GM10248 (cell line): ENCODE measurements at regions of chr11 and their contacts with region 1.

Region 1: GRCh38 chr11:120929664-120930154 is 94.2 kb upstream of the TBCEL start:
- DNase-seq: peak; percentile 77
- CTCF ChIP-seq: peak; percentile 66

Region 2: DNA sequence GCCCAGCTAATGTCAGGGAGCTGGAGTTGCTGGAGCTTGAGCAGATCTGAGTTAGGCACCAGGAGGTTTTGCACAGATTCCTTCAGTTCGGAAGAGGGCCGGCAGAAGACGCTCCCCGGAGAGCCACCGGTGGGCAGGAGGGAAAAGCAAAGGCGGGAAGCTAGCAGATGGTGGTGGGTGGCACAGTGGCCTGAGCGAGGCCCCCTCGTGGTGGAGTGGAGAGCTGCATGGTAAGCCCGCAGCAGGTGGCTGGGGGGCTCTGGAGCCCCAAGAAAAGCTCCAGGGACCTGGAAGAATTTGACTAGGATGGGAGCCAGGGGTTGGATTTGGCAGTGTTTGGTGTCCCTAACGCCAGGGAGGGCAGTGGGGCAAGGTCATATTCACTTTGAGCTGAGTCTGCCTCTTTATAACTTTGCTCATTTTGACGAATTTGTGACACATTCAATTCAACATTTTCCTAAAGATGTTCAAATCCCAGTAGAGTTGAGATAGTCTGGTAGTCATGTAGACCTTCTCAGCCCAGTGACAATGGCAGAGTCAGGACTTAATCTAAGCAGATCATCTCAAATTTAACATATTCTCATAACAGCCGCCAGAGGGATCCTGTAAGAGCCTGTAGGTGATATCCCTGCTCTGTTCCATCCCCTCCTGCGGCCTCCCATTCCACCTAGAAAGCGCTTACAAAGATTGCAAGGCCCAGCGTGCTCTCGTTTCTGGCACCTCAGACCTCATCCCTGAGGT is 849.8 kb before region 1 on chr11:
- CTCF ChIA-PET with region 1: no interaction called
- POLR2A ChIA-PET with region 1: no interaction called
- DNase-seq: no peak
- CTCF ChIP-seq: peak; percentile 21

Region 3: DNA sequence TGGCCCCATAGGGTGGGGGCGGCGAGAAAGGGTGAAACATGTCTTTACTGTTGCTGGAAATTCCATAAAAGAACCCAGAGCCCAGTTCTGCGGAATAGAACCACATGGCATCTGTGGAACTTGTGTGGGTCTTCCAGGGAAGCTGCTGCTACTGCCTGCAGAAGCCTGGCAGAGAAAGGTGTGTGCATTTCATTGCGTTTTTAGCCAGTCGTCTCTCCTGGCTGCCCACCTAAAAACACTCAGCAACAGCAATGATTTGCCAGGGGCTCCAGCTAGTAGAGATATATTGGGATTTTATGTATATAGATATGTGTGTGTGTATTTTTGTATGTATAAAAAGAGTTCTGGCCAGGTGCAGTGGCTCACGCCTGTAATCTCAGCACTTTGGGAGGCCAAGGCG is 33.0 kb before region 1 on chr11:
- CTCF ChIA-PET with region 1: no interaction called
- POLR2A ChIA-PET with region 1: no interaction called
- DNase-seq: no peak
- CTCF ChIP-seq: no peak

Region 4: DNA sequence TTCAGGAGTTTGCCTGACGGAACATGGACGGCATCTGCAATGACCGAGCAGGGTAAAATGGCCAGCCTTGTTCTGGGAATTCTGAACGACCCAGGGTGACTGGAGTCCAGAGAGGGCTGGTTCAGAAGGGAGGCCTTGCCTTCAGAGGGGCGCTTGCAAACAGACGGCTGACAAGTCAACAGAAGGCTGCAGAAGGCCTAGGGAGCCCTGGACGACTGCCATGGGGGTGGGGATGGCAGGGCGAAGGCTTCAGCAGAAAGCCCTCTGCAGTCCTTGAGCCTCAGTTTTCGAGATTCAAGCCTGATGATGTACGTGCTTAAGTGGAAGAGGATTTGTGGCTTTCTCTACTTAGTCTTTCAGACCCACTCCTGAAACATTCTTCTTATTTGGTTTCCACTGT is 22.9 kb before region 1 on chr11:
- CTCF ChIA-PET with region 1: interaction called, 10 read pairs
- POLR2A ChIA-PET with region 1: no interaction called
- DNase-seq: no peak
- CTCF ChIP-seq: no peak

Region 5: GRCh38 chr11:120912504-120912903 is 17.2 kb before region 1 on chr11:
- CTCF ChIA-PET with region 1: interaction called, 16 read pairs
- POLR2A ChIA-PET with region 1: no interaction called
- DNase-seq: peak; percentile 53
- CTCF ChIP-seq: peak; percentile 36

Region 6: GRCh38 chr11:120917559-120918239 is 12.0 kb before region 1 on chr11:
- CTCF ChIA-PET with region 1: interaction called, 16 read pairs
- POLR2A ChIA-PET with region 1: no interaction called
- DNase-seq: no peak
- CTCF ChIP-seq: no peak

Region 7: GRCh38 chr11:120952461-120953434 is 23.0 kb after region 1 on chr11:
- CTCF ChIA-PET with region 1: interaction called, 10 read pairs
- POLR2A ChIA-PET with region 1: no interaction called
- DNase-seq: peak; percentile 80
- CTCF ChIP-seq: peak; percentile 82